ENCODE measurements at regions of chr11 and their contacts with region 1.

Region 1: GRCh38 chr11:5380740-5381342 is 2.8 kb upstream of the OR51M1 start:
- DNase-seq: no peak
- H3K4me3 Mint-ChIP-seq: no peak overlapping the region
- H3K27ac Mint-ChIP-seq: no peak overlapping the region
- H3K4me1 Mint-ChIP-seq: no peaks in the 10 kb centered on the region
- H3K27me3 Mint-ChIP-seq: no peaks in the 10 kb centered on the region

Region 2: DNA sequence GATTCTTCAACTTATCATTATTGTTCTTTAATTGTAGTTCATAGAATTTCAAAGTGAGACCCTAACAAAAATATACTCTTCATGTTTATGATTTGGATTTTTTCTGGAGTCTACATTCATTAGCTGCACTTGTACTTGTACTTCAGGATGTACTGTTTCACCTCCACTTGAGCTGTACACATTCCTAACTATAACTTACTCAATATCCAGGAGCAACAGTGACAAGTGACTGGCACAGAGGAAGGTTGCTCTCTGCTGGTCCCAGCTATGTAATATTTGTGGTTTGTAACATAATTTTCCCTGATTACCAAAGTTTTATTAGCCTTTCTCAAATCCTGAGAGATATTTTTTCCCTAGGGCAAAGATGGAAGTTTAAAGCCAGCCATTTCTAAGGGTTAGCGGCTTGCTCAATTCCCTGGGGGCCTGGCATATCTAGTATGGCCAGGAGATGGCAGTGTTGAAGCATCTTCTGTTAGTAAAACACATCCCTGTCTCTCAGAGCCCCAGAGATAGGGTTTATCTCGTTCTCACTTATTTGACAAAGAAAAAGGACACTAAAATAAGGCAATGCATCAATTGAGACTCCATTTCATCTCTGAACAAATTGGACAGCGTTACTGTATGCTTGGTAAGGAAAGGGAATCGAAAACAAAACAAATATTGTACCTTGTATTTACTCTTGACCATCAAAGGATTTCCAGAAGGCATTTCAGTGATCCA is 256.9 kb before region 1 on chr11:
- intact Hi-C with region 1: loop called (anchors 1 kb)
- DNase-seq: peak; percentile 11
- H3K4me3 Mint-ChIP-seq: no peak overlapping the region
- H3K27ac Mint-ChIP-seq: no peak overlapping the region
- H3K4me1 Mint-ChIP-seq: no peaks in the 10 kb centered on the region
- H3K27me3 Mint-ChIP-seq: no peaks in the 10 kb centered on the region

Region 3: GRCh38 chr11:5153574-5154431 is 227.0 kb before region 1 on chr11:
- intact Hi-C with region 1: no loop called
- DNase-seq: no peak
- H3K4me3 Mint-ChIP-seq: no peak overlapping the region
- H3K27ac Mint-ChIP-seq: no peak overlapping the region
- H3K4me1 Mint-ChIP-seq: no peaks in the 10 kb centered on the region
- H3K27me3 Mint-ChIP-seq: no peaks in the 10 kb centered on the region